Heart right ventricle (tissue), 16 donors: ENCODE measurements at regions of chr5 and their contacts with region 1.

Region 1: DNA sequence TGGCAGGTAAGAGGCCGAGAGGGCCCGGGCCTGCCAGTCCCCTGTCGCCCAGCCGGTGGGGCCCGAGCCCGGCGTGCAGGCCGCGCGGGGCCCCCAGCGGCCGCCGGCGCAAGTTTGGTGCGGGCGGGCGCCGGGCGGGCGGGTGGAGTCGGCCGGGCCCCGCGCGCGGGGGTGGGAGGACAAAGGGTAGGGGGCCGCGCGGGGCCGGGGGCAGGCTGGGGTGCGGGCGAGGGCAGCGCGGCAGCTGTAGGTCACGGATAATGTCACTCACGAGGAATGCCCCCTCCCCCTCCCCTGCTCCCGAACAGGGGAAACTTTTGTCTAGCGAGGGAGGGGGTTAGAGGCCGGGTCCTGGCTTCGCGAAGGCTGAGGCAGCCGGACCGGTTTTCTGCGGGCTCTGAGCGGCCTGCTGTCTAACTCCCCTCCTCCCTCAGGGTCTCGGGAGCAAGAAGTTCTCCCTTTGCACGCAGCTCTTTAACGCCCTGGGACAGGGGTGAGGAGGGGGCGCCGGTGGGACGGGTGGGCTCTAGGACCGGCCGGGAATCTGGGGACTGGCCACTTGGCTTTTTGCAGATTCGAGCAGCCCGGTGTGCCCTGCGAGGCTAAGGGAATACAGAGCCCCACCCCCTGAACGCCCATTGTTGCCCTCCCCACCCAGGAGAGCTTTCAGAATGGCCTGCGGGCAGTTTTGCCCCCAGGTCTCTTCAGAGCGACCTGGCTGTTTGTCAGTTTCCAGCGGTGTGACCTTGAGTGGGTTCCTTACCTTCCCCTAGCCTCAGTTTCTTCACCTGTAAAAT is 21.3 kb upstream of the NDST1 start:
- DNase-seq: peak; percentile 56 to 67
- ATAC-seq: peak; percentile 20 to 53 (median 36)
- H3K4me3 ChIP-seq: peak overlapping the region; percentile 69 to 99 (median 94)
- H3K27ac ChIP-seq: peak overlapping the region; percentile 90 to 99 (median 96)
- H3K4me1 ChIP-seq: peaks cover 36 to 58% (median 54%) of the 10 kb centered on the region in 9 donors
- H3K27me3 ChIP-seq: no peaks in the 10 kb centered on the region
- CTCF ChIP-seq: peak in 1 of 9 donors; percentile 13

Region 2: DNA sequence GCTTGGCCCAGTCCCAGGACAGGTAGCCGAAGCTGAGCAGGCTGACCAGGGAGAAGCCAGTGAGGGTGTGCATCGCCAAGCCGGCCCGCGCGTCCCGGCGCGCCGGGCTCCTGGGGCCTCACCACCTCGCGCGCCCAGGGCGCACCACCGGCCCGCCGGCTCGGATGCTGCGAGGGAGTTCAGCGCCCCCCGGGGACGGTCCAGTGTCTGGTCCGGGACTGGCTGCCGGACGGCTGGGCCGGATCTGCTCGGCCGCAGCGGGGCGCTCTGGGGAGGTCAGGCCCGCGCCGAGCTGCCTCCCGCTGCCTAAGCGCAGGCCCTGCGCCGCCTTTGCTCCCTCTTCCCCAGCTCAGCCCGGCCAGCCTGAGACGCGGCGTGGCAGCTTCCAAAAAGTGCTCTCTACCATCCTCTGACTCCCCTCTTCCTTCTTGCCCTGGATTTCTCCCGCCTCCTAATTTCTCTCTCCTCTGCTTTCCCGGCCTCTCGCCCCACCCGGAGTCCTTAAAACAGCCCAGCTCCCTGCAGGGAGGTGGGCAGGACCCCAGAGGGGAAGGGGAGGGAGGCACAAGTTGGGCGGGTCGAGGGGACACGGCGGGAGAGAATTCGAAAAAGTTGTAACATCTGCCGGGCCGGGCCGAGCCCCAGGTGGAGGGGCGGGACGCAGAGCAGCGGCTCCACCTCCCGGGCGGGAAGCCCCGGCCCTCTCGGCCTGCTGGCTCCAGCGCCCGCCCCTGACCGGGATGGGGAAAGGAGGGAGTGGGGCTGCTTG is 184.1 kb before region 1 on chr5 and contains the start of gene ARSI:
- intact Hi-C with region 1: no loop called
- DNase-seq: peak; percentile 24 to 39
- ATAC-seq: peak; percentile 42 to 84 (median 71)
- H3K4me3 ChIP-seq: peak within 1 kb of the TSS; percentile 10 to 50 (median 39)
- H3K27ac ChIP-seq: peak within 1 kb of the TSS in 8 of 10 donors; percentile 3 to 69 (median 59)
- H3K4me1 ChIP-seq: peaks cover 0 to 35% (median 12%) of the 10 kb centered on the region in 9 donors
- H3K27me3 ChIP-seq: peaks cover 0 to 38% (median 26%) of the 10 kb centered on the region in 7 donors
- CTCF ChIP-seq: peak in 3 of 9 donors; percentile 24 to 32 (median 25)
- total RNA-seq, gene ARSI: 0.11 to 0.65 (median 0.32) TPM in 9 of 10 donors, not detected in the other

Region 3: DNA sequence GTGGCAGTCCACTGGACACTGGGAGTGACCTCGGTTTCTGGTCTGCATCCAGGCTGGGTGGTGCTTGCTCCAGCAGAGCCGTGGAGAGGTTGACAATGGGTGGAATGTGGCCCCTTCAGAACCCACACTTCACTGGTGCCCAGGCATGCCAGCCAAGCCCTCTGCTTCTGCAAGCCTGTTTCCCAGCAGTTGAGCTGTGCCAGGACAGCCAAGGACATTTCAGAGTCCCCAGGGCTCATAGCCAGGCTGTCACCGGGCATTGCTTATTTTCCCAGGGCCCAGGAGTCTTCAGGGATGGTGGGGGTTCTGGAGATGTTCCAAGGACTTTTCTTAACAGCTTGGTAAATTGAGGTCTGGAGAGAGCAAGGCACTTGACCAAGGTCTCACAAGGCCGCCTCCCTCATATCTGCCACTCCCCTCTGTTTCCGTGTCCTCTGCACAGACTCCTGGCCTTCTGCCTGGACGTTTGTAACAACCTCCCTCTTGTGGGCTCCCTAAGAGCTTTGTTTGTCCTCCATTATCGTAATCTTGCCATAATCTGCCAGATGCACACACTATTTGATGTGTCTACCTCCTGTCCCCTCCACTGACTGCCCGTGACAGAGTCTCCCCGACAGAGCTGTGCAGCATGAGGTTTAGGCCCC is 17.5 kb after region 1 on chr5:
- intact Hi-C with region 1: loop called in 1 of 10 experiments (anchors 2 kb)
- DNase-seq: peak; percentile 60 to 70
- ATAC-seq: peak; percentile 57 to 75 (median 67)
- H3K4me3 ChIP-seq: no peak overlapping the region
- H3K27ac ChIP-seq: peak overlapping the region; percentile 59 to 93 (median 85)
- H3K4me1 ChIP-seq: peaks cover 62 to 100% (median 100%) of the 10 kb centered on the region in 9 donors
- H3K27me3 ChIP-seq: no peaks in the 10 kb centered on the region
- CTCF ChIP-seq: peak in 4 of 9 donors; percentile 12 to 34 (median 18)

Region 4: DNA sequence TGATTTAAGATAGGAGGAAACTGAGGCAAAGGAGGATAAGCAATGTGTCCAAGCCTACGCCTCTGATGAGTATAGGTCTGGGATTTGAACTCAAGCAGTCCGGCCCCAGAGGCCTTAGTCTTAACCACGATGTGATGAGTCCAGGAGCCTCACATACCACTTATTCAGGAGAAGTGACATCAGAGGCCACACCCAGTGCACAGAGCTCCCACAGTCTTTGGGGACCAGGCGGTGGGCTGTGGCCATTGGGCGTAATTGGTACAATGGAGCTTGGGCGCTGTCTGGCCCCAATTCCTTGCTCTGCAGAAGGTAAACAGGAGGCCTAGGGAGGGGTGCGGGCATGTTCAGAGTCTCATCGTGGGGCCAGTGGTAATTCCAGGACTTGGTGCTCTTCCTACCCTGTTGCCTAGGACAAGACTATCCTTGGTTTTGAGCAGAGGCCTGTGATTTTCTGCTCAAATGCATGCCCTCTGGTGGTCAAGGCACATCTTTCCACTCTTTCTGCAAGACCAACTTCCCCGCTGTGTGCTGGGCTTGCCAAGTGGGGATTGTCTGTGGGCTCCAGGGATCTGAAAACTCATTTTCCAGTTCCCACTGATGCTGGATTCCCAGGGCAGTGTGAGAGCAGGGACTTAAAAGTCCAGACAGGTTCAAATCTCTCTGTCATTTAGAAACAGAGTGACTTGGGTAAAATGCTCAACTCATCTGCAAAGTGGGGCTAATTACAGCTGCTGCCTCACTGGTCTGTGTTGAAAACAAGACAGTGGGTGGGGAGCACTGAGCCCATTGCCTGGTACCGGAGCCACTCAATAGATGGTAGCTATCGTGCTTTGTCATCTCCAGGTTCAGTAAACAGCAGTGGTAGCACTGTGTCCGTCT is 37.1 kb after region 1 on chr5:
- intact Hi-C with region 1: loop called in 8 of 10 experiments (anchors 2 to 5 kb)
- DNase-seq: peak in 1 of 2 donors; percentile 58
- ATAC-seq: peak; percentile 27 to 78 (median 62)
- H3K4me3 ChIP-seq: no peak overlapping the region
- H3K27ac ChIP-seq: peak overlapping the region; percentile 27 to 90 (median 74)
- H3K4me1 ChIP-seq: peaks cover 31 to 91% (median 67%) of the 10 kb centered on the region in 9 donors
- H3K27me3 ChIP-seq: no peaks in the 10 kb centered on the region
- CTCF ChIP-seq: peak; percentile 39 to 80 (median 68)

Region 5: DNA sequence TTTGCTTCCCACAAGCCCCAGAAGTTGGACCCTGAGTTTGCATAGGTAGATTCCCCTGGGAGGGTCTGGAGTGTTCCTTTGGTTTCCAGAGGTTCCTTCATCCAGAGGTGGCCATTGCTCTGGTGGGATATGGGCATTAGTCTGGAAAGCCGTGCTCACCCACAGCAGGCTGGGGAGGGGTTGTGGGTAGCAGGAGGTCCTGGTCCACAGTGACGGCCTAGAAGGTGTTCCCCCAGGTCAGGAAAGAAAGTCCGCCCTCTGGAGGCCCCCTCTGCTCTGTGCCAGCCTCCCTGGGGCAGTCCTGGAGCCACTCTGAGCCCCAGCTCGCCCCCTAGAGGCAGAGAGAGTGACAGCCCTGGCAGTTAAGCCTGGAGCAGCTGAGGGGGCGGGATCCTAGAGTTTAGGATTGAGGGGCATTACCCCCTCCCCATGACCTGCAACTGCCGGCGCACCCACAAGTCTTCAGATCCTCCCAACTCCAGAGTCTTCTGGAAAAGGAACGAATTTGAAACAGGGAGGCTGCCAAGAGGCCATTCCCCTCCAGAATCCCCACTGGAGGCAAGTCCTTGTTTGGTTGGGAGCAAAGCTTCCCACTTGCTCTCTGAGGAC is 58.1 kb after region 1 on chr5:
- intact Hi-C with region 1: loop called in 6 of 10 experiments (anchors 5 to 10 kb)
- DNase-seq: peak; percentile 78 to 80
- ATAC-seq: peak; percentile 69 to 81 (median 77)
- H3K4me3 ChIP-seq: no peak overlapping the region
- H3K27ac ChIP-seq: peak overlapping the region in 2 of 10 donors; percentile 12 to 48
- H3K4me1 ChIP-seq: peaks cover 0 to 46% (median 32%) of the 10 kb centered on the region in 9 donors
- H3K27me3 ChIP-seq: no peaks in the 10 kb centered on the region
- CTCF ChIP-seq: peak; percentile 71 to 95 (median 89)